ENCODE measurements at regions of chr18 and their contacts with region 1.

Region 1: DNA sequence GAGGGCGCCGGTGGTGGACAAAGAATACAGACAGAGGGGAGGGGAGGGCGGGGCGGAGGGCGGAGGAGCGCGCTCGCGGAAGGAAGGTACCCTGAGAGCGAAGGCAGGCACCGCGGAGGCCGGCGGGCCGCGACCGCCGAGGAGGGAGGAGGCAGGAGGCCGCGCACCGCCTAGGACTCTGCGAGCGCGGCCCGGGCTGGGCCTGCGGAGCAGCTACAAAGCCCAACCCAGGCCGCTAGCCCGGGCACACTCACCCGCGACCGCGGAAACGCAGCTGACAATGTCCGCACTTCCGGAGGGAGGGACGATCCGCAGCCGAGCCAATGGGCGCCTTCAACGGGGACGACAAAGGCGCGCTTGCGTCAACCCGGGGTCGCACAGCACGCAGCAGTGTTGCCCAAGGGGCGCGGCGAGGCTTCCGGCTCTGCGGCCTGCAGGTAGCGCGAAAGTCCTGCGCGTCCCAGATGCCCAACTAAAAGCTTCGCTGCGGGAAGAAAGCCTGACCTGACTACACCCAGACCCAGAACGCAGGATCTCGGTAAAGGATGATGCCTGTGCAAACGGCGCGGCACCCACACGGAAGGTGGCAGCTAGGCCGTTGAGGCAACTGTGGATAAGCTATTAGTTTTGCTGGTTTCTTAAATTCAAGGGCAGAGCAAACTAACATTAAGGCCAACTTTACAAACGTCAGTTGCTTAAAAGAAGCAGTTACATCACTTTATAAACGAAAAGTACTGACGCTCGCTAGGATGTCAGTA is at the start of gene C18orf32:
- DNase-seq: peak; percentile 96
- ATAC-seq: peak; percentile 93
- H3K4me3 Mint-ChIP-seq: peak within 1 kb of the TSS; percentile 94
- H3K27ac Mint-ChIP-seq: peak within 1 kb of the TSS; percentile 98
- H3K4me1 Mint-ChIP-seq: peaks cover 49% of the 10 kb centered on the region
- H3K27me3 Mint-ChIP-seq: no peaks in the 10 kb centered on the region
- CTCF ChIP-seq: no peak
- total RNA-seq, gene C18orf32: 21.7 to 22.4 TPM

Region 2: GRCh38 chr18:49444581-49444980 is 42.6 kb before region 1 on chr18:
- CTCF ChIA-PET with region 1: no interaction called
- POLR2A ChIA-PET with region 1: no interaction called
- intact Hi-C with region 1: no loop called
- DNase-seq: no peak
- ATAC-seq: no peak
- H3K4me3 Mint-ChIP-seq: no peak overlapping the region
- H3K27ac Mint-ChIP-seq: no peak overlapping the region
- H3K4me1 Mint-ChIP-seq: peaks cover 17% of the 10 kb centered on the region
- H3K27me3 Mint-ChIP-seq: no peaks in the 10 kb centered on the region
- CTCF ChIP-seq: no peak

Region 3: GRCh38 chr18:49459404-49460171 is 27.5 kb before region 1 on chr18:
- CTCF ChIA-PET with region 1: interaction called, 10 read pairs
- POLR2A ChIA-PET with region 1: interaction called, 45 read pairs
- intact Hi-C with region 1: no loop called
- DNase-seq: peak; percentile 56
- ATAC-seq: peak; percentile 41
- H3K4me3 Mint-ChIP-seq: peak overlapping the region; percentile 84
- H3K27ac Mint-ChIP-seq: peak overlapping the region; percentile 80
- H3K4me1 Mint-ChIP-seq: peaks cover 45% of the 10 kb centered on the region
- H3K27me3 Mint-ChIP-seq: no peaks in the 10 kb centered on the region
- CTCF ChIP-seq: no peak

Region 4: DNA sequence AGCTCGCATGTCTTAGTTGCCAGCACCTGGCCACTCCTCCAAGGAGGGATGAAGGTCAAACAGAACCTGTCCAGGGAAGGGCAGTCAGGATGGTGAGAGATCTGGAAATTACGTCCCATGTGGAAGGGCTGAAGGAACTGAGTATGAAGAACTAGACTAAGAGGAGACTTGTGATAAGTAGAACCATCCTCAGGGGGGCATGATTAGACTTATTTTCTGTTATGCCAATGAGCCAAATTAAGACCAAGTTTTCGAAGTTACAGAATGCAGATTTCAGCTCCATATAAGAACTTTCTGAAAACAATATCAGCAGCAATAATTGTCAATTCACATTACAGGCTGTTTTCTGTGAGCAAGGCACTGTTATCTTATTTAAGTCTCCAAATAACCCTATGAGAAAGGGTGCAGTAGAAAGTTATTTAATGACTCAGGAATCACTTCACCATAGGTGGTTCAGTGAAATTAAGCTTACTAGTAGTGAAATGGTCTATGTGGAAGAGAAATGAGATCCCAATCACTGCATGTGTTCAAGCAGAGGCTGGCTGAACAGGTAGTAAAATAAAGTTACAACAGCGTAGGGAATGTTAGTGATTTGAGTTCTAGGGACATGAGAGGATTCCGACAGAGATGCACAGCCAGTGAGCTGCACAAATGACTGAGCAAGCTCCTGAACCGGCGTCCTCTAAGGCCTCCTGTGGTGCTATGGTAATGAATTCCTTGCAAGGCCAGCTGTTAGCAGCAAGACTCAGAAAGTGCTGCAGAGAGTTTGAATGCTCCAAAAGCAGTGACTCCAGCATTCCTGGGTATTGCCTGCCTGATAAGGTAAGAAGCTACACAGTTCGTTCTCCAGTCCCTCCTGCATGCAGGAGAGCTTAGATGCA is 22.2 kb before region 1 on chr18:
- CTCF ChIA-PET with region 1: interaction called, 10 read pairs
- POLR2A ChIA-PET with region 1: interaction called, 45 read pairs
- intact Hi-C with region 1: no loop called
- DNase-seq: no peak
- ATAC-seq: no peak
- H3K4me3 Mint-ChIP-seq: no peak overlapping the region
- H3K27ac Mint-ChIP-seq: no peak overlapping the region
- H3K4me1 Mint-ChIP-seq: peaks cover 8% of the 10 kb centered on the region
- H3K27me3 Mint-ChIP-seq: no peaks in the 10 kb centered on the region
- CTCF ChIP-seq: no peak

Region 5: DNA sequence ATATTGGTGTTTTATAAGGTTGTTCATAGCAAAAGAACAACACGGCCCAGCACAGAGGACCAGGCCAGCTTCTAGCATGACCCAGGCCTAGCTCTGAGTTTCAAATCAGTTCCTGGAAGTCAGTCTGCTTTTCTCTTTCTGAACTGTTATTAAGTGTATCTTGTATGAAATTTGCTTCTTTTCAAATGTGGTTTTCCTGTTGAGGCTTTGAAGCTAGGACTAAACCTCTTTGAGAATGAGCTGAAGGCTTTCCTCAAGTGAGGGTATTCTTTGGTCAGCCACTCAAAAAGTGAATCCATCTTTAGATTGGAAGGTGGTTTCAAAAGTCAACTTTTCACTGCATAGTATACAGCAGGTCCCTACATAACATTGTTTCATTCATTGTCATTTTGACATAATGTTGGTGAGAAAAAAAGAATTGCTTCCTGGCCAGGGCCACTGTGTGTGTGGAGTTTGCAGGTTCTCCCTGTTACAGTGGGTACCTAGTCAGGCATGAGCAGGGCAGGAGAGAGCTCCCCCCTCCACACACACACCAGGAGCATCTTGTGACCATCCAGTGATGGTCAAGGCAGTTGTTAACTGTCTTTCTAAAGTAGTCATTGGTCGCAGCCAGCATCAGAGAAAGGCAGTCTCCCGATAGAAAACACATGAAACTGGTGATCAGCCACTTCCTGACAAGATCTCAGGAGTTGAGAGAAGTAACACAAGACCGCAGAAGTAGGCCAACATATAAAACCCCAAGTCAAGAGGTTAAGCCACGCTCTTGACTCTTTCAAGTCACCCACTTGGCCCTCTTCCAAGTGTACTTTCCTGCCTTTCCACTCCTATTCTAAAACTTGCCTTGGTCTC is 332.9 kb after region 1 on chr18:
- CTCF ChIA-PET with region 1: no interaction called
- POLR2A ChIA-PET with region 1: interaction called, 3 read pairs
- intact Hi-C with region 1: loop called (anchors 5 kb)
- DNase-seq: peak; percentile 60
- ATAC-seq: peak; percentile 75
- H3K4me3 Mint-ChIP-seq: peak overlapping the region; percentile 27
- H3K27ac Mint-ChIP-seq: peak overlapping the region; percentile 93
- H3K4me1 Mint-ChIP-seq: peaks cover 63% of the 10 kb centered on the region
- H3K27me3 Mint-ChIP-seq: no peaks in the 10 kb centered on the region
- CTCF ChIP-seq: no peak